Ascending aorta (tissue), 2 donors: ENCODE measurements at regions of chr1 and their contacts with region 1.

Region 1: DNA sequence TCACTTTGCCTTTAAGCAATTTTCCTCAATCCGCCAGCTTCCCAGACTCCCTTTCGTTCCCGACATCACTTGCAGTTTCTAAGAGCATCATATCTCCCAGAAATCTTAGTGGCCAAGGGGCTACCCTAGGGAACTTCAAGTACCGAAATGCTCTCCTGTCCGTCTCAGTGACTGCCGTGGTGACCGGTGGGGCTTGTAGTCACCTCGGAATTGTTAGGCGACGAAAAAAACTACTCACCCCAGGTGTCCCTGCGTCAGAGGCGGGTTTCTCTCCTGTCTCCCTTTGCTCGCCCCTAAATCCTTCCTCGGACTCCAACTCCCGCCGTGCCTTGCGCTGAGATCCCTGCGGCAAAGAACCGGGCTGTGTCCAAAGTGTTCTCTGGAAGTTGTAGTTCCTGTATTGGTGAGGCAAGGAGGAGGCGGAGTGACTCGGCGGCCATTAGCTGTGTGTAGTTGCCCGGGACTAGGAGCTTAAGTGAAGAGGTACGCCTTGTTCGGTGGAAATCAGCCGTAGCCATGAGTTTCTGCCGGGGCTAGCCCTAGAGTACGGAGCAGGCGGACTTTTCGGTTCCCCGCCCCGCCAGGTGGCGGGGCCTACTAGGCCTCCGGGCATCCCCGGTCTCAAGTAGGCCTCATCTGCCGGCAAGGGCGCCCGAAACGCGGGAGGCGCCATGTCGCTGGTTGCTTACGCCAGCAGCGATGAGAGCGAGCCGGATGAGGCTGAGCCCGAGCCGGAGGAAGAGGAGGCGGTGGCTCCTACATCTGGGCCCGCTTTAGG is at the start of gene PRCC:
- DNase-seq: peak; percentile 98 to 100
- H3K4me3 ChIP-seq: peak within 1 kb of the TSS; percentile 78 to 97
- H3K27ac ChIP-seq: peak within 1 kb of the TSS; percentile 90 to 96
- H3K4me1 ChIP-seq: peaks cover 0 to 28% of the 10 kb centered on the region in 2 donors
- H3K27me3 ChIP-seq: no peaks in the 10 kb centered on the region
- CTCF ChIP-seq: no peak
- total RNA-seq, gene PRCC: 16.3 TPM

Region 2: DNA sequence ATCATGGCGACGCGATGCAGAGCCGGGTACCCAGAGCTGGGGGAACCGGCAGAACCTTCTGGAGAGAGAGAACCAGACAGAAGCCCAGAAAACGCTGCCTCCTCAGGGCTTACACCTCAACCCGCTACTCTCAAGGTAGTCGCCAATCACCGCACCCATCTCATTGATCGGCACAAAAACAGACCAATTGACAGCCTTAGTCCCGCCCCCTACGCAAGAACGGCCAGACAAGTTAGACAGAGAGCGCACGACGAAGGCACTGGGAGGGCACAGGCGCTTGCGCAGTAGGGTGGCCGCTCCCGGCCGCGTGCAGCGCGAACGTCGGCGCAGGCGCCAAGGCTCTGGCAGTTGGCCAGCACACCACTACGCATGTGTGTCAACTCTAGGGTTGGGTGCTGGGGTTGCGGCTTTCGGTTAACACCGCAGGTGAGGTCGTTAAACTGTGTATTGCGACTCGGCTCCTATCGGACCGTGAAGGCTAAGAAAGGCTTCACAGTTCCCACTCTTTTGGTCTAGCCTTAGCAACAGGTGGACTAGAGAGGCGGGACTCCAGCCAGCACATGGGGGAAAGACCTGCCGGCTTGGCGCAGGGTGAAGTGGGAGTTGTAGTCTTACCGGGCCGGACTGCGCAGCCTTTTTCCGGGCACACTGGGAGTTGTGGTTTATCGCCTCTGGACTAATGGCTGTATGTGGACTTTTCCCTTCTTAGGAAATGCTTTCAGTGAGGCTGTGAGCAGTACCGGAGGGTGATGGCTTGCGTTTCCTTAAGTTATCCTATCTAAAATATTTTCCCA is 428.9 kb before region 1 on chr1 and contains the starts of genes CCT3 and TSACC:
- intact Hi-C with region 1: loop called (anchors 2 kb)
- DNase-seq: peak; percentile 99 to 100
- H3K4me3 ChIP-seq: peak within 1 kb of the TSS; percentile 79 to 83
- H3K27ac ChIP-seq: peak within 1 kb of the TSS; percentile 74 to 82
- H3K4me1 ChIP-seq: peaks cover 13% of the 10 kb centered on the region in 2 donors
- H3K27me3 ChIP-seq: no peaks in the 10 kb centered on the region
- CTCF ChIP-seq: no peak
- total RNA-seq, gene CCT3: 109 TPM
- total RNA-seq, gene TSACC: not detected

Region 3: DNA sequence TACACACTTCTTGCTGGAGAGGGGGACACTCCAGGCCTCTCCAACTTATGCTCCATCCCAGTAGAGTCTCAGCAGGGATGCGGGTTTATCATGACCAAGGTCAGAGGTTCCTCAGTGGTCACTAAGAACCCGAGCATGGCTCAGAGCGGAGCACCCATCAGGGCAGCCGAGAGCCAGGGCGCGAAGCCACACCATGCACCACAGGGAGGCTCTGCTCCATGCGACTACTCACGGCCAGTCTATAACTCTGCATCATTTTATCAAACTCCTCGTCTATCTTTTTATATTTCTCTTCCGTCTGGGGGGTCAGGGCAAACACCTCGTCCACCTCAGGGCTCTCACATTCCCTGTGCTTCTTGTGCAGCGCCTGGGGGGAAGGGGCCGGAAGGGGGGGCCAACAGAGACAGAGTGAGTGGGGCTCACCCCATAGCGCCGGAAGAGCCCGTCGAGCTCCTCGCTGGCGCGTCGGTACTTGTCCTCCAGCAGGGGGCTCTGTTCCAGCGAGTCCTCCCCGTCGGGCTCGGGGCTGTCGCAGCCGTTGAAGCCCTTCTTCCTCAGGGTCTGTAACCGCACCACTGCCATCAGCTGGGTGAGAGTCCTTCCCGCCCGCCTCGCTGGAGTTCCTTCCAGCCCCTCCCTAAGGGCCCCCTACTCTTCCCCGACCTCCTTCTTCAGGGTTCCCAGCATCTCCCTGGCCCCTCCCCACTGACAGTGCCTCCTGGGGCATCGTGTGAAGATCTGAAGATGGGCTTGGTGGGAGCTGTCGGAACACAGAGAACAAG is 286.7 kb before region 1 on chr1:
- intact Hi-C with region 1: no loop called
- DNase-seq: no peak
- H3K4me3 ChIP-seq: no peak overlapping the region
- H3K27ac ChIP-seq: peak overlapping the region; percentile 86 to 87
- H3K4me1 ChIP-seq: peaks cover 26 to 80% of the 10 kb centered on the region in 2 donors
- H3K27me3 ChIP-seq: no peaks in the 10 kb centered on the region
- CTCF ChIP-seq: peak; percentile 58 to 64 (median 62)

Region 4: GRCh38 chr1:156705918-156706656 is 61.2 kb before region 1 on chr1:
- intact Hi-C with region 1: loop called (anchors 5 kb)
- DNase-seq: peak; percentile 19 to 85
- H3K4me3 ChIP-seq: peak overlapping the region; percentile 58 to 69
- H3K27ac ChIP-seq: peak overlapping the region; percentile 69 to 76
- H3K4me1 ChIP-seq: peaks cover 10 to 38% of the 10 kb centered on the region in 2 donors
- H3K27me3 ChIP-seq: no peaks in the 10 kb centered on the region
- CTCF ChIP-seq: peak; percentile 87 to 95 (median 91)

Region 5: DNA sequence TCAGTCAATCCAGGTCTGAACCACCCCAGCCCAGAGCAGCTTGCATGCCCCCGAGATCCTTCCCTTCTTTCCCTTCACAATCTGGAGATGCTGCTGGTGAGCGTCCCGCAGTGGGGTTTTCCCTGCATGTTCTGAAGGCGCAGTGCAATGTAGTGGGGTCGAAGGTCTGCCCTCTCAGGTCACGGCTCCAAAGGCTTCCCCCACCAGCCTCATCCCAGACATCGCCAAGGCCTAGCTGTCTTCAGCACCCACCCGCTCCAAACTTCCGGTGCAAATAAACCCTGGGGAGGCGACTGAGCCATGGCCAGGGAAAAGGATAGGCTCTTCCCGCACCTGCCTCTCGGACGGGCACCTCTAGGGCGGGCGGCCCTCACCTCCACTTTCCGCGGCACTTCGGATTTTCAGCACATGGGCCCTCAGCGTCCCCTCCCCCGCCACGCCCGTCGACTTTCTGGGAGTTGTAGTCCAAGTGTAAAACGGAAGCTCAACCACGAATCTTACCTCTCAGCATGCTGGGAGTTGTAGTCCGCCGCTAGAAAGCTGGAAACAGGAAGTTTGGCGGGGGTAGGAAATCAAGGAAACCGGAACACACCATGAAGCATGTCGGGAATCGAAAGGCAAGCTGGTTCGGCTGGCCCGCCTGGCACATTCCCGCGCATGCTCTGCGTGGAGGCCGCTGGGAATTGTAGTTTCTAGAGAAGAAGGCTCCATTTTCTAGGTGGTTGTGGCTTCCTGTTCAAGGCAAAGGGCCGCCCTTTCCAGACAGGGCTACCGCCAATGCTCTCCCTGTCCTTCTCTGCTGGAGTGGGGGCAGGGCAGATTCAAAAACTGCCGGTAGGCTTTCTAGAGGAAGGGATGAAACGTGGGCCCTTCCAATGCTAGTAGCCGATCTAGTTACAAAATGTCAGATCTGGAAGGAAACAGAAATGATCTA is 26.3 kb before region 1 on chr1 and contains the start of gene MRPL24:
- intact Hi-C with region 1: loop called (anchors 1 kb)
- DNase-seq: peak; percentile 97 to 100
- H3K4me3 ChIP-seq: peak within 1 kb of the TSS; percentile 55 to 91
- H3K27ac ChIP-seq: peak within 1 kb of the TSS; percentile 87 to 91
- H3K4me1 ChIP-seq: peaks cover 4 to 28% of the 10 kb centered on the region in 2 donors
- H3K27me3 ChIP-seq: no peaks in the 10 kb centered on the region
- CTCF ChIP-seq: no peak
- total RNA-seq, gene MRPL24: 17.0 TPM

Region 6: GRCh38 chr1:156751758-156752757 is 15.2 kb before region 1 on chr1:
- intact Hi-C with region 1: loop called (anchors 1 kb)
- DNase-seq: peak; percentile 86 to 98
- H3K4me3 ChIP-seq: peak overlapping the region; percentile 73 to 91
- H3K27ac ChIP-seq: peak overlapping the region; percentile 87 to 89
- H3K4me1 ChIP-seq: peaks cover 10 to 28% of the 10 kb centered on the region in 2 donors
- H3K27me3 ChIP-seq: no peaks in the 10 kb centered on the region
- CTCF ChIP-seq: peak in 1 of 3 experiments; percentile 27

Region 7: DNA sequence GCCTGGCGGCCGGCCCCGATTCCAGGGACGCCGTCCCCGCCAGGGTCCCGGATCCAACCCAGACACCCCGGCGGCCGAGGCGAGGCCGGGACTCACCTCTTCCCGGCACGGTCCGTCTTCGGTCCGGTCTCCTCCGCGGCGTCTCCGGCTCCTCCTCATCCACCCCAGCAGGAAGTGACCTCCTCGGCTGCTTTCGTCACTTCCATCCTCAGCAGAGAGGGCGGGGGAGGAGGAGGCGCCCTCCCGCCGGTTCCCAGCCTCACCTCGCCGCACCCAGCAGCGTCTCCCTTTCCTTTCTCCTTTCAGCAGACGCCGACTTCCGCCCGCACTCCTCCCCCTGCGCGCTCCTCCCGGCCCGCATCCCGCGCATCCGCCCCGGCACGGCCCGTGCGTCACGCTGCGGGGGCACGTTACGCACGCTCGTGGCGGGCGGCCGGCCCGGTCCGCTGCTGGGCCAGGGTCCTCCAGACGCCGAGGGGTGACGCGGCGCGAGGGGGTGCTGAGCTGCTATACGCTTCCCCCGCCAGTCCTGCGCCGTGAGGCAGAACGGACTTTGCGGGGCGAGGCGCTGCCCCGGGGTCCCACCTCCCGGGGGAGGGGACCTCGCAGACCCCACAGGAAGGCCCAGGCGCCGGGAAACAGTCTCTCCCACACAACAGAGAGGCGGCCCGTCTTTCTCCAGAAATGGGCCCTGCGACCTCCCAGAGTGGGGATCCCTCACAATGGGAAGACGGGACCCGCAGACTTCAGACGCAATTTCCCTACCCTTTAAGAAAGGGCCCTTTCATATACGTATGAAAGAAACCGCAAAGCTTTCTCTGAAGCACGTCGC is 371.1 kb after region 1 on chr1 and contains the start of gene ETV3:
- intact Hi-C with region 1: loop called (anchors 10 kb)
- DNase-seq: peak; percentile 71 to 96
- H3K4me3 ChIP-seq: peak within 1 kb of the TSS; percentile 80 to 98
- H3K27ac ChIP-seq: peak within 1 kb of the TSS; percentile 96 to 97
- H3K4me1 ChIP-seq: peaks cover 5 to 16% of the 10 kb centered on the region in 2 donors
- H3K27me3 ChIP-seq: no peaks in the 10 kb centered on the region
- CTCF ChIP-seq: no peak
- total RNA-seq, gene ETV3: 9.6 TPM